T-cell (primary cell): ENCODE measurements at regions of chr13 and their contacts with region 1.

Region 1: GRCh38 chr13:93254775-93255174 is 28.2 kb downstream of the GPC6 start:
- DNase-seq: no peak
- ATAC-seq: no peak
- H3K4me3 ChIP-seq: no peak overlapping the region
- H3K4me3 Mint-ChIP-seq: no peak overlapping the region
- H3K27ac ChIP-seq: no peak overlapping the region
- H3K27ac Mint-ChIP-seq: no peak overlapping the region
- H3K4me1 ChIP-seq: no peaks in the 10 kb centered on the region
- H3K4me1 Mint-ChIP-seq: no peaks in the 10 kb centered on the region
- H3K27me3 ChIP-seq: no peaks in the 10 kb centered on the region
- H3K27me3 Mint-ChIP-seq: peaks cover 0 to 3% of the 10 kb centered on the region in 2 donors

Region 2: DNA sequence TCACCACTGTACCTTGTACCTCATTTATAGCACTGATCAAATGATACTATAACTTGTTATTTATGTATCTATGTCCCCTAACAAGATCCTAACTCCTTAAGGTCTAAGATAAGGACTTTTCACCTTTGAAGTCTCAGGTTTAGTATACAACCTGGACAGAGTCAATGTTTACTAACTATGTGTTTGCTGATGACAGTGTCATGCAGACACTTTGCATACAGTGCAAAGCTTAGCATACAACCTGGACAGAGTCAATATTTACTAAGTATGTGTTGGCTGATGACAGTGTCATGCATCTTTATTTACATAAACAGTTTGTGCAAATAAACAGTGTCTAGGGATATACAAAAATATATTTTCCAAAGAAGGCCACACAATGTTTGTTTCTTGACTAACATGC is 1190.0 kb after region 1 on chr13:
- CTCF ChIA-PET with region 1: interaction called in 1 of 2 experiments, 10 read pairs
- POLR2A ChIA-PET with region 1: no interaction called
- DNase-seq: no peak
- ATAC-seq: no peak
- H3K4me3 ChIP-seq: no peak overlapping the region
- H3K4me3 Mint-ChIP-seq: no peak overlapping the region
- H3K27ac ChIP-seq: no peak overlapping the region
- H3K27ac Mint-ChIP-seq: no peak overlapping the region
- H3K4me1 ChIP-seq: no peaks in the 10 kb centered on the region
- H3K4me1 Mint-ChIP-seq: no peaks in the 10 kb centered on the region
- H3K27me3 ChIP-seq: peaks cover 0 to 4% of the 10 kb centered on the region in 2 experiments
- H3K27me3 Mint-ChIP-seq: peaks cover 0 to 2% of the 10 kb centered on the region in 2 donors